IMR-90 (cell line): ENCODE measurements at regions of chr7 and their contacts with region 1.

Region 1: DNA sequence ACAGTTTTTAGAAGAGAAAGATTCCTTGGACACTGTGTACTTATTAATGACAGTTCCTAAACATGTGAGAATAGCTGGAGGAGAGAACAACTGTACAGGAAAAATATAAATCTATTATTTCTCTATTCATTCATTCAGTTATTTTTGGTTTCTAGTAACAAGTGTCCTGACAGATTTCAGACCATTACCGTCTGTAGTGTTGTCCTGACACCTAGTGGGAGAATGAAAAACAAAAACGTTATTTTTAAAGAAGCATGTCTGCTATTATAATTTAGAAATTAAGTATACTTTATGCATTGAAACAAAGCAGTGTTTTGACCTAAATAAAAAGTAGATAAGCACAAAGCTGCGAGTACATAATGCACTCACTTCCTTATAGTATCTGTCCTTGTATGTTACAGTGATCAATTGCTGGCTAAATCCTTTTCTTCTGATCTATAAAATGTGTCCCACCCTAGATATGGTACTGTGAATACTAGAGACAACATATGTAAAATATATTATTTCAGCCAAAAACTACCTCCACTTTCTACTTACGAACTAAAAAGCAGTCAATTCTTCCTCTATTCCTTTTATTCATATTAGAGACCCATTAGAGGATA is 575.6 kb downstream of the ARL4A start:
- DNase-seq: peak; percentile 52
- ATAC-seq: peak; percentile 63; the same call in 1 of the 2 replicates
- H3K4me3 ChIP-seq: no peak overlapping the region
- H3K27ac ChIP-seq: no peak overlapping the region
- H3K4me1 ChIP-seq: no peaks in the 10 kb centered on the region
- H3K27me3 ChIP-seq: no peaks in the 10 kb centered on the region
- CTCF ChIP-seq: peak; percentile 87
- POLR2A ChIP-seq: no peak
- RAD21 ChIP-seq: peak; percentile 90

Region 2: GRCh38 chr7:12524794-12525386 is 738.1 kb before region 1 on chr7:
- CTCF ChIA-PET with region 1: interaction called, 7 read pairs
- POLR2A ChIA-PET with region 1: no interaction called
- dilution Hi-C with region 1: no loop called
- in situ Hi-C with region 1: loop called (anchors 5 kb)
- intact Hi-C with region 1: loop called (anchors 1 kb)
- DNase-seq: peak; percentile 69
- ATAC-seq: peak; percentile 67; the same call in 1 of the 2 replicates
- H3K4me3 ChIP-seq: no peak overlapping the region
- H3K27ac ChIP-seq: no peak overlapping the region
- H3K4me1 ChIP-seq: no peaks in the 10 kb centered on the region
- H3K27me3 ChIP-seq: peaks cover 1% of the 10 kb centered on the region; the same call in 1 of the 2 replicates
- CTCF ChIP-seq: peak; percentile 76
- POLR2A ChIP-seq: no peak
- RAD21 ChIP-seq: peak; percentile 66

Region 3: GRCh38 chr7:12638851-12639467 is 624.1 kb before region 1 on chr7:
- CTCF ChIA-PET with region 1: interaction called, 4 read pairs
- POLR2A ChIA-PET with region 1: no interaction called
- dilution Hi-C with region 1: no loop called
- in situ Hi-C with region 1: loop called (anchors 5 kb)
- intact Hi-C with region 1: loop called (anchors 1 kb)
- DNase-seq: peak; percentile 54
- ATAC-seq: peak; percentile 69
- H3K4me3 ChIP-seq: no peak overlapping the region
- H3K27ac ChIP-seq: no peak overlapping the region
- H3K4me1 ChIP-seq: peaks cover 3% of the 10 kb centered on the region; the same call in 1 of the 2 replicates
- H3K27me3 ChIP-seq: no peaks in the 10 kb centered on the region; the same call in 1 of the 2 replicates
- CTCF ChIP-seq: peak; percentile 76
- POLR2A ChIP-seq: no peak
- RAD21 ChIP-seq: peak; percentile 77

Region 4: GRCh38 chr7:12859761-12860160 is 403.3 kb before region 1 on chr7:
- CTCF ChIA-PET with region 1: no interaction called
- POLR2A ChIA-PET with region 1: no interaction called
- dilution Hi-C with region 1: no loop called
- in situ Hi-C with region 1: no loop called
- intact Hi-C with region 1: loop called (anchors 1 kb)
- DNase-seq: no peak
- ATAC-seq: no peak
- H3K4me3 ChIP-seq: no peak overlapping the region
- H3K27ac ChIP-seq: no peak overlapping the region
- H3K4me1 ChIP-seq: no peaks in the 10 kb centered on the region
- H3K27me3 ChIP-seq: no peaks in the 10 kb centered on the region
- CTCF ChIP-seq: no peak
- POLR2A ChIP-seq: no peak
- RAD21 ChIP-seq: no peak